Left lung (tissue), 14 donors: ENCODE measurements at regions of chr5 and their contacts with region 1.

Region 1: DNA sequence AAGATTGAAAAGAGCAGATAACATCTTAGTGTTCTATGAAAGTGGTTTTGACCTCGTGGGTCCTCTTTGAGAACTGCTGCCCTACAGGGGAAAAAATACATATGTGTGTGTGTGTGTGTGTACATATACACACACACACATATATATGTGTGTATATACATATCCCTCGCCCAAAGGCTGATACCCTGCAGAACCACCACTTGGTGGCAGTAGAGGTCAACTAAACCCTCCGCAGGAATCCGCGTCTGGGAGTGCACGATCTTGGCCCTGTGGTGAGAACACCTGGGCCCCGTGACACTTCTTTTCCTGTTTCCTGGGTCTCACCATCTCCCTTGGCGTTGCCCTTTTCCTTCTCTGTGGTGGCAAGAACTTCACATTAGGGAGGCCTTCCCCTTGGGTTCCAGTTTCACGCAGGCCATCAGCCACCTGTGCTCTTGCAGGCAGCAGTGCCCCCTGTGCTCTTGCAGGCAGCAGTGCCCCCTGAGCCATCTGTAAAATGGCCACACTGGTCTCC is 8.2 kb downstream of the IL9 start:
- DNase-seq: peak in 2 of 4 donors; percentile 49 to 76
- ATAC-seq: peak; percentile 97
- H3K4me3 ChIP-seq: no peak overlapping the region
- H3K27ac ChIP-seq: no peak overlapping the region
- H3K4me1 ChIP-seq: peaks cover 0 to 6% of the 10 kb centered on the region in 2 donors
- H3K27me3 ChIP-seq: peaks cover 0 to 23% of the 10 kb centered on the region in 2 donors
- CTCF ChIP-seq: peak; percentile 60 to 82

Region 2: DNA sequence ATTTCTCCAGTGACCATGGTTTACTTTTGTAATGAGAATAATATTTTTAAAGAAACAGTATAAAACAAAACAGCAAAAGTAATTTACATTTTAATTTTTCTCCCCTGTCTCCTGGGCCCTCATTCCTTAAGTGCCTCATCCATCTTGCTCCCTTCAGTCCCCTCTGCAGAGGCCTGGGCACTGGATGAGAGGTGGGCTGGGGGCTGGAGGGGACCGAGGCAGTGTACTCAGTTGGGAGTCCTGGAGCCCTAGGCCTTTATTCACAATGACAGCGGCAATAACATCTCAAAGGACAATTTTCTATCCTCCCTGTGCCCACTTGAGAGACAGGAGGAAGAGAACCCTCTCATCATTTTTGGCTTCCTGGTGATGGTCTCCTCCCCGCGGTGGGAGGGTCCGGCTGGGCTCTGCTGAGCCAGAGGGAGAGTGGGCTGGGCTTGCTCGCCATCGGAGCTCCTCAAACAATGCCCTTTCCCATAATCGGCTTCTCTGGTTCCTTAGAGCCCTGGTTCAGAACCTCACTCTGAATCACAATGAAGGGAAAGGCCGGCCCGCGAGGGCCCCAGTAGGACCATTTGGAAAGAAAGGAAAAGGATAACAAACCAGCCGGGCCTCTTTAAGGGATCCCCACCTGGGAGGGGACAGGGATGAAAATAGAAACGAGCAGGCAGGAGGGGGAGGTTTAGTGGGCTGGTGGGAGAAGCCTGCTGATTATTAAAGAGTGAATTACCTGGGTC is 315.2 kb after region 1 on chr5:
- intact Hi-C with region 1: loop called in 1 of 2 experiments (anchors 10 kb)
- DNase-seq: peak in 1 of 4 donors; percentile 13
- ATAC-seq: no peak
- H3K4me3 ChIP-seq: no peak overlapping the region
- H3K27ac ChIP-seq: no peak overlapping the region
- H3K4me1 ChIP-seq: no peaks in the 10 kb centered on the region
- H3K27me3 ChIP-seq: peaks cover 0 to 46% of the 10 kb centered on the region in 2 donors
- CTCF ChIP-seq: no peak

Region 3: GRCh38 chr5:136212252-136212721 is 324.9 kb after region 1 on chr5:
- intact Hi-C with region 1: loop called (anchors 5 to 10 kb)
- DNase-seq: peak in 3 of 4 donors; percentile 19 to 54 (median 43)
- ATAC-seq: peak; percentile 80
- H3K4me3 ChIP-seq: no peak overlapping the region
- H3K27ac ChIP-seq: no peak overlapping the region
- H3K4me1 ChIP-seq: no peaks in the 10 kb centered on the region
- H3K27me3 ChIP-seq: peaks cover 0 to 38% of the 10 kb centered on the region in 2 donors
- CTCF ChIP-seq: peak; percentile 77 to 87